ENCODE measurements at regions of chr10 and their contacts with region 1.

Region 1: GRCh38 chr10:131453594-131454355 is 142.3 kb upstream of the TCERG1L start:
- DNase-seq: peak; percentile 86
- ATAC-seq: peak; percentile 73
- H3K4me3 Mint-ChIP-seq: no peak overlapping the region
- H3K27ac Mint-ChIP-seq: no peak overlapping the region
- H3K4me1 Mint-ChIP-seq: no peaks in the 10 kb centered on the region
- H3K27me3 Mint-ChIP-seq: peaks cover 14% of the 10 kb centered on the region
- CTCF ChIP-seq: peak; percentile 91

Region 2: GRCh38 chr10:131464789-131465188 is 11.0 kb after region 1 on chr10:
- CTCF ChIA-PET with region 1: interaction called, 14 read pairs
- POLR2A ChIA-PET with region 1: no interaction called
- intact Hi-C with region 1: no loop called
- DNase-seq: no peak
- ATAC-seq: no peak
- H3K4me3 Mint-ChIP-seq: no peak overlapping the region
- H3K27ac Mint-ChIP-seq: no peak overlapping the region
- H3K4me1 Mint-ChIP-seq: no peaks in the 10 kb centered on the region
- H3K27me3 Mint-ChIP-seq: no peaks in the 10 kb centered on the region
- CTCF ChIP-seq: no peak

Region 3: GRCh38 chr10:131531265-131532190 is 77.8 kb after region 1 on chr10:
- CTCF ChIA-PET with region 1: no interaction called
- POLR2A ChIA-PET with region 1: no interaction called
- intact Hi-C with region 1: no loop called
- DNase-seq: no peak
- ATAC-seq: no peak
- H3K4me3 Mint-ChIP-seq: no peak overlapping the region
- H3K27ac Mint-ChIP-seq: no peak overlapping the region
- H3K4me1 Mint-ChIP-seq: no peaks in the 10 kb centered on the region
- H3K27me3 Mint-ChIP-seq: no peaks in the 10 kb centered on the region
- CTCF ChIP-seq: no peak

Region 4: DNA sequence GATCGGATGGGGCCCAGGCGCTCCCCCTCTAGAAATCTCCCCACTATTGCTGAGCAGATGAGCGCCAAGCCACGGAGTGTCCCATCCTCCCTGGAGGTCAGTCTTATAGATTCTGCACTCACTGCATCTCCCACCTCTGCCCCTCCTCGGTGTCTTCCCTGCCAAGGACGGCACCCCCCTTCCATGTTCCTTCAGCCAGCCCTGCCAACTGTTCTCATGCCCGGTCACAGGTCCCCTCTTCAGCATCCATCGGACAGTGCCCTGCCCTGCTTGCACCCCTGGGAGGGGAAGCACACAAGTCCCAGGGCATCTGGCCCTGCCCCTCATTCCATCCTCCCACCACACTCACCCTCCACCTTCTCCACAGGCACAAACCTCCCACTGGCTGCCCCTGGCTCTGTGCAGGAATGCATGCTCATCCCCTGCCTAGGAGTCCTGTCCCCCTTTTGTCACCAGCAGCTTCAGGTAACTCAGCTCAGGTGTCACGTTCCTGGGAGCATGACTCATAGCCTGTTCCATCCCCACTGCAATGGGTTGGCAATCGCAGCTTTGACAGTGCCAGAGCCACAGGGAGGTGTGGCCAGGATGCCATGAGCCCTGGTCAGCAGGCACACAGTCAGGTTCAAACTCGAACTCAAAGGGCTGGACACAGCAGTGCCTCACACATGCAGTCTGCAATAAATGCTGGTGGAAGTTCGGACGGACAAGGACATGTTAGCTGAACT is 92.5 kb after region 1 on chr10:
- CTCF ChIA-PET with region 1: no interaction called
- POLR2A ChIA-PET with region 1: no interaction called
- intact Hi-C with region 1: no loop called
- DNase-seq: no peak
- ATAC-seq: no peak
- H3K4me3 Mint-ChIP-seq: no peak overlapping the region
- H3K27ac Mint-ChIP-seq: no peak overlapping the region
- H3K4me1 Mint-ChIP-seq: no peaks in the 10 kb centered on the region
- H3K27me3 Mint-ChIP-seq: no peaks in the 10 kb centered on the region
- CTCF ChIP-seq: no peak

Region 5: DNA sequence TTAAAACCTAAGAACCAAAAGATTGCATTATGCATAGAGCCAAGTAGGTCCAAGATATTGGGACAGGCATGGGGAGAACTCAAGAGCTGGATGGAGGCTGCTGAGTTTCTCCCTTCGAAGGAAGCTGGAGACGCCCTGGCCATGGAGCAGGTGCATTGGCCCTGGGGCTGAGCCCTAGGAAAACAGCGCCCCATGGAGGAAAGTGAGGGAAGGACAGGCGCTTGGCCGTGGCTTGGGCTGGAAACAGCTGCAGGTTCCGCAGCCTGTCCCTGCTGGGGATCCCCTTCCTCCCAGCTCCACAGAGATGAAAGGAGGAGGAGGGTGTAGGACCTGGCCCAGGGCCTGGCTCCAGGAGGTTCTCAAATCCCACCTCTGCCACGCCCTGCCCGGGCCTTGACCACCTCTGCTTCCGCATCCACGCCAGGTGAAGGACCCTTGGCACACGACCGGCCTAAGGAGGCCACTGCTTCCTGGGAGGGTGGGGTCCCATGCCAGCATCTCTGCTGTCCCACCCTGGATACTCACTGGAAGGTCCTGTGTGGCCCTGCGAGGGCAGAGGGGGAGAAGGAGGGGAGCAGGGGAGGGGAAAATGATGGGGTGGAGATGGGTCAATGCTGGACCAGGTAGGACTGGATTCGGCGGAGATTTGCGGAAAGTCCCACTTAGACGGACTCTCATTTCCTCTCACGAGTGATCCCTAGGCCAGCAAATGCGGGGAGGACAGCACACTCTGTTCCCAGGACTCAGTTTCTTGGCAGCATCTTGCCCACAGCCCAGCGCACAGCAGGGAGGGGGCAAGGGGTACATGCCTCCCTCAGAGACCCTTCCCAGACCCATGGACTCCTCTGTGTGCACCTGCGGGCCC is 116.3 kb after region 1 on chr10:
- CTCF ChIA-PET with region 1: no interaction called
- POLR2A ChIA-PET with region 1: no interaction called
- intact Hi-C with region 1: no loop called
- DNase-seq: peak; percentile 17
- ATAC-seq: no peak
- H3K4me3 Mint-ChIP-seq: no peak overlapping the region
- H3K27ac Mint-ChIP-seq: no peak overlapping the region
- H3K4me1 Mint-ChIP-seq: no peaks in the 10 kb centered on the region
- H3K27me3 Mint-ChIP-seq: no peaks in the 10 kb centered on the region
- CTCF ChIP-seq: peak; percentile 38

Region 6: DNA sequence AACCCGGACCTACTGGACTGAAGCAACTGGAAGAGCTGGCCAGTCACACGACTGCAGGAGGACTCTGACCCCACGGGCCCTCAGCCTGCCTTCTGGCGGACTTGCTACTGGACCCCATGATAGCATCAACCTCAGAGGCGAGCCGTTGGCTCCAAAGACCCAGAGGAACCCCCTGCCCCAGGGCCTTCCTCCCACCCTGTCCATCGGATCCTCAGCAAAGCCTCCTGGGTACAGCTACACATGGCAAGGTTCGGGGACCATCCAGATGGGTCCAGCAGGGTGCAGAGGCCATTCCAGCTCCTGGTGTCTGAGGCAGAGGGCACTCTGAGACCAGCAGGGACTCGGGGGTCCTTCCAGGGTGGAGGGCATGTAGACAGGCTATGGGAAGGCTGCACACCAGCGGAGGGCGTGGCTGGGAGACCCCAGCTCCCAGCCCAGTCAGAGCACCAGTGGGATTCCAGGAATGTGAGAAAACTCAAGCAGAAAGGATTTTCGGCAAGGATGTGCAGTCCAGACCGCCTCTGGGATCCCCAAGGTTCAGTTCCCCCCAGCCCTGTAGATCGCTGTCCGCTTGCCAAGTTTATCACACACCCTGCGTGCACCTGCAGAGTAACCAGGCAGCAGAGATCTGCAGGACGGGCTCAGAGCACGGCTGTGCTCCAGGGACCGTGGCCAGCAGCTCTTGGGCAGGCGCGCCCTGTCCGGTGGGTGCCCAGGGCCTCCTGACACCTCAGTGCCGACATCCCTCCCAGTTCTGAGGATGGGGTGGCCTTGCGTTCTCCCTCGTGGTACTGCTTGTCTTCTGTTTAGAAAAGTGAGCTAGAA is 357.2 kb after region 1 on chr10:
- CTCF ChIA-PET with region 1: no interaction called
- POLR2A ChIA-PET with region 1: no interaction called
- intact Hi-C with region 1: no loop called
- DNase-seq: no peak
- ATAC-seq: no peak
- H3K4me3 Mint-ChIP-seq: no peak overlapping the region
- H3K27ac Mint-ChIP-seq: no peak overlapping the region
- H3K4me1 Mint-ChIP-seq: no peaks in the 10 kb centered on the region
- H3K27me3 Mint-ChIP-seq: peaks cover 2% of the 10 kb centered on the region
- CTCF ChIP-seq: no peak